Breast epithelium (tissue), 4 donors: ENCODE measurements at regions of chr1 and their contacts with region 1.

Region 1: GRCh38 chr1:96220639-96221038 is 500.9 kb upstream of the PTBP2 start:
- DNase-seq: no peak
- H3K4me3 ChIP-seq: no peak overlapping the region
- H3K27ac ChIP-seq: no peak overlapping the region
- H3K4me1 ChIP-seq: no peaks in the 10 kb centered on the region
- H3K27me3 ChIP-seq: no peaks in the 10 kb centered on the region
- CTCF ChIP-seq: no peak
- POLR2A ChIP-seq: no peak

Region 2: DNA sequence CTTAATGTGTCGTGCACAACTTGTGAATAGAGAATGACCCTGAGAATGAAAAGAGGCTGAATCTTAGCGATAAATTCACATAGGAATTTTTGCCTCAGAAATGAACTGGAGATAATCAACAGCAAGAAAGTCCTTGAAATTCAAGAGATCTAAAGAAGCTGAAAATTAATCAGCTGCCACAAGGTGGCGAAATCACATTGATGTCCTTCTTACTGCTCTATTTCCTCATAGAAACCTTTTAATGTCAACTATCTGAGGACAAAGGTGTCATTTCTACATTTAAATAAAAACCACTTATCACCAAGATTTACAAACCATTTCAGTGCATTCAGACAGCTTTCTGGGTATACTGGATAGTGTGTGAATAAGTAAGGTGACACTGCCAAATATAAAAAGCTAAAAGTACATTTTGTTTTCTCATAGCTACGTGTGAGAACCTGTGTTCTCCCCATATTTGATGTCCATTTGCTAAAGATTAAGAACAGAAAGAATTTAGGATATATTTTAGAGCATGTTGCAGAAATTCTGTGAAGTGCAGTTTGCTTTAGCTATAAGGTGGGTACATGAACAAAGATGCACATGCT is 15.6 kb after region 1 on chr1:
- intact Hi-C with region 1: no loop called
- DNase-seq: no peak
- H3K4me3 ChIP-seq: no peak overlapping the region
- H3K27ac ChIP-seq: peak overlapping the region in 1 of 2 donors; percentile 59
- H3K4me1 ChIP-seq: no peaks in the 10 kb centered on the region
- H3K27me3 ChIP-seq: no peaks in the 10 kb centered on the region
- CTCF ChIP-seq: peak; percentile 53 to 69 (median 58)
- POLR2A ChIP-seq: no peak

Region 3: GRCh38 chr1:96992871-96993270 is 772.2 kb after region 1 on chr1:
- intact Hi-C with region 1: loop called (anchors 10 kb)
- DNase-seq: no peak
- H3K4me3 ChIP-seq: no peak overlapping the region
- H3K27ac ChIP-seq: no peak overlapping the region
- H3K4me1 ChIP-seq: no peaks in the 10 kb centered on the region
- H3K27me3 ChIP-seq: no peaks in the 10 kb centered on the region
- CTCF ChIP-seq: no peak
- POLR2A ChIP-seq: no peak

Region 4: DNA sequence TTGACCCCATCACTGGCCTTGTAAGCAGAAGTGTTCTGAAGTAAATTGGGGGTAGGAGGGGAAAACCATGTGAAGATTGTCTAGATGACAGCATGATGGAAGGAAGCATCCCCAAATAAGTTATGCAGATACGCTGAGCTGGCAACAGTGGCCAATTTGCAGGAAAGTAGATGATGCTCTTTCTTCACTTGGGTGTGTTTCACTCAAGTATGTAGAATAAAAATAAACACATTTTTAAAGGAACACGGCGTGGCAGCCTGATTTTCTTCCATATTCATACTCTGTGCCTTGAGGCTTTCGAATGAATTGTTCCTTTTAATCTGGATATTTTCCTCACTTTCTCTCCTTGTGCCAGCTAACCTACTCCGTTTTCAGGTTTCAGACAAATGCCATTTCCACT is 1995.7 kb after region 1 on chr1:
- intact Hi-C with region 1: loop called (anchors 5 kb)
- DNase-seq: no peak
- H3K4me3 ChIP-seq: no peak overlapping the region
- H3K27ac ChIP-seq: no peak overlapping the region
- H3K4me1 ChIP-seq: no peaks in the 10 kb centered on the region
- H3K27me3 ChIP-seq: no peaks in the 10 kb centered on the region
- CTCF ChIP-seq: no peak
- POLR2A ChIP-seq: no peak